Aorta (tissue), 5 donors: ENCODE measurements at regions of chr16 and their contacts with region 1.

Region 1: GRCh38 chr16:89700100-89700648 is 1.3 kb downstream of the SPATA2L start:
- DNase-seq: peak; percentile 99 to 100
- ATAC-seq: peak; percentile 87
- H3K4me3 ChIP-seq: peak overlapping the region in 1 of 2 donors; percentile 6
- H3K27ac ChIP-seq: peak overlapping the region in 1 of 2 donors; percentile 29
- H3K4me1 ChIP-seq: no peaks in the 10 kb centered on the region
- H3K27me3 ChIP-seq: peaks cover 0 to 3% of the 10 kb centered on the region in 2 donors

Region 2: DNA sequence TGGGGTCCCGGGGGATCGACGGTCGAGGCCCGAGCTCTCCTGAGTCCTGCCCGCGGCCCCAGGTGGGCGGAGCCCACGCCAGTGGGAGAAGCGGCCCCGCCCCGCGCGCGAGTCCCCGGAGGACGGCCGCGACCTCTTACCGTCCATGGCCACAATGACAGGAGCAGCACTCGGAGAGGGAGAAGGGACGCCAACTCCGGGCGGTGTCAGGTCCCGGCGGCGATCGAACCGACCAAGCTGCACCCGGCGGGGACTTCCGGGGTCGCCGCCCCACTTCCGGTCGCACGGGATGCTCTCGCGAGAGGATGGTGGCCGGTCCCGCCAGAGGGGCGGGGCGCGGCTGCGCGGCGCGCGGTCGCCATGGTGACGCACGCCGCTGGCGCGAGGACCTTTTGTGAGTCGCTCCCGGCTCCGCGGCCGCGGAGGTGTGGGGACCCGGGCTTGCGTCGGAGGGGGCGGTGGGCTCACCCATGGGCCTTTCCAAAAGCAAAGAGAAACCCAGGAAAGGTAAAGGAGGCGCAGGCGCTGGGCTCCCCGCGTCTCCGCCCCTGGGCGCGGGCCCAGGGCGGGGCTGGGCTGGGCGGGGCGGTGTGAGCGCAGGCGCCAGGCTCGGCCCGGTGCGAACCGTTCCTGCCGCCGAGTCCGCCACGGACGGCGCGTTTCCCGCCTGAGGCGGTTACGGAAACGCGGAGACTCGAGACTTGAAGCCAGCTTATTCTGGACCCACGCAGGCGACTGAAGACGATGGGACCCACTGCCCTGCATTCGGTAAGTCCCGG is 42.5 kb before region 1 on chr16 and contains the starts of genes CHMP1A and SPATA33:
- intact Hi-C with region 1: loop called in 1 of 2 experiments (anchors 5 kb)
- DNase-seq: peak; percentile 93 to 97
- ATAC-seq: peak; percentile 97
- H3K4me3 ChIP-seq: peak within 1 kb of the TSS; percentile 66 to 70
- H3K27ac ChIP-seq: no peak within 1 kb of the TSS
- H3K4me1 ChIP-seq: peaks cover 0 to 3% of the 10 kb centered on the region in 2 donors
- H3K27me3 ChIP-seq: no peaks in the 10 kb centered on the region
- total RNA-seq, gene CHMP1A: 69.0 to 78.8 TPM
- total RNA-seq, gene SPATA33: 6.5 to 8.6 TPM

Region 3: GRCh38 chr16:89720813-89721545 is 20.8 kb after region 1 on chr16 and contains the starts of genes VPS9D1 and ZNF276:
- intact Hi-C with region 1: loop called in 1 of 2 experiments (anchors 2 kb)
- DNase-seq: peak; percentile 82 to 95
- ATAC-seq: peak; percentile 90
- H3K4me3 ChIP-seq: peak within 1 kb of the TSS; percentile 70 to 83
- H3K27ac ChIP-seq: peak within 1 kb of the TSS; percentile 45 to 74
- H3K4me1 ChIP-seq: no peaks in the 10 kb centered on the region
- H3K27me3 ChIP-seq: peaks cover 0 to 2% of the 10 kb centered on the region in 2 donors
- total RNA-seq, gene VPS9D1: 10.3 to 15.3 TPM
- total RNA-seq, gene ZNF276: 23.6 to 30.4 TPM

Region 4: GRCh38 chr16:89860747-89861304 is 160.7 kb after region 1 on chr16:
- intact Hi-C with region 1: loop called in 1 of 2 experiments (anchors 5 kb)
- DNase-seq: peak; percentile 66 to 85
- ATAC-seq: peak; percentile 83
- H3K4me3 ChIP-seq: no peak overlapping the region
- H3K27ac ChIP-seq: no peak overlapping the region
- H3K4me1 ChIP-seq: no peaks in the 10 kb centered on the region
- H3K27me3 ChIP-seq: no peaks in the 10 kb centered on the region

Region 5: GRCh38 chr16:89873972-89874689 is 174.0 kb after region 1 on chr16:
- intact Hi-C with region 1: loop called in 1 of 2 experiments (anchors 5 kb)
- DNase-seq: peak; percentile 97 to 99
- ATAC-seq: peak; percentile 96
- H3K4me3 ChIP-seq: peak overlapping the region; percentile 36 to 82
- H3K27ac ChIP-seq: peak overlapping the region; percentile 52 to 99
- H3K4me1 ChIP-seq: no peaks in the 10 kb centered on the region
- H3K27me3 ChIP-seq: no peaks in the 10 kb centered on the region